Activated CD8-positive, alpha-beta T cell treated with anti-CD3 and anti-CD28 coated beads for 36 hours (primary cell): ENCODE measurements at regions of chr4 and their contacts with region 1.

Region 1: DNA sequence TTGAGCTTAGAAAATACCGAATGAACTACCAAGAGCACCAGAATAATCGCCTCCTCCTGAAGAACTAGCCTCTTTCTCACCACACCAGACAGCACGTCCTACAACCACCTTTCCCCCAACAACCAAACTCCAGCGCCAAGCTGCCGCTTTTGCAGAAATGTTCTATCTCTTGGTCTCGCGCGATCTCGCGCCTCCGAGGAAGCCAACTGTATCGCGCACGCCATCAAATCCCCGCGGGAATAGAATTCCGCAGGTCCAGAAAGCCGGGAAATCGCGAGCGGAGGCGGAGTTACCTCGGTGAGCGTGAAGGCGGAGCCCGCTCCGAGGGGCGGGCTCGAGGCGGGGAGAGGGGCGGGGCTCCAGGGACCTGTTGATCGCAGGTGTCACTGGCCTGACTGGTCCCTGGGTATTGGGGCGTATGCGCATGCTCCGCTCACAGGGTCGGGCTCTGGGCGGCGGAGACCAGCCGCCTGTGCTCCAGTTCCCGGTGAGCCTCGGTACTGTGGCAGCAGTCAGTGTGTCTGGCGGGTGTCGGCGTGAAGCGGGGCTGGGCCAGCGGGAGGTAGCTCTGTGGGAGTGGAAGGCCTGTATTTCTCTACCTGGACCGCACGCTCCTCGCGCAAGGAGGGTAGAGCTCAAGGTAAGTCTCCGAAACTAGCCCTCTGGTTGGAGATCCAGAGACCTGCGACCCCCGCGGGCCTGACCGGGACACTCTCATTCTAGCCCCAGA is at the start of gene USP53:
- DNase-seq: peak; percentile 99
- ATAC-seq: peak; percentile 93
- H3K4me3 Mint-ChIP-seq: peak within 1 kb of the TSS; percentile 83
- H3K27ac Mint-ChIP-seq: peak within 1 kb of the TSS; percentile 87
- H3K4me1 Mint-ChIP-seq: peaks cover 49% of the 10 kb centered on the region
- H3K27me3 Mint-ChIP-seq: no peaks in the 10 kb centered on the region
- CTCF ChIP-seq: no peak
- total RNA-seq, gene USP53: 14.4 to 15.8 TPM

Region 2: DNA sequence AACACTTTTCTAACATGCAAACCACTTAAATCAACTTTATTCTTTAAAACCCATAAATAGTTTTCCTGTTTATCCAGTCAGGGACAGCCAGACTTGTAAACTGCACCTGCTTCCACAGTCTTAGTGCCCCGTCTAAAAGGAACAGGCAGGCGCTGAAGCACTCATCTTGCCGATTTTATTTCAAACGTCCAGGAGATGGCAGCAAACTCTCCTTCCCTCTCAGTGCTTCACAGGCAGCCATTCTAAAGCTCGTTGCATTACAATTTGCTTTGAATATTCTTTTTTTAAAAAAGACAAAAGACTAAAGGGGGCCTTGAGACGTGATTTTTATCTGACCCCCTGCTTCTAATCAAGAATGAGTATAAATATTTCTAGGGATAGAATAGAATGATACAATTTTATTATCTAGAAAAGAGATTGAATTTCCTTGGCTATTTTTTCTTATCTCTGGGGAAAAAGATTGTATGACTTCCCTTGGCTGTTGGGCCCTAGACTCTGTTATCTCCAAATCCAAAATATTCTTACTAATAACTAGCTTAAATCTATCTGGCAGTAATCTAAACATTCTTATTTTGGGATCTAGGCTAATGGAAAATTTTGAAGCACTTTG is 170.3 kb before region 1 on chr4:
- CTCF ChIA-PET with region 1: interaction called, 35 read pairs
- POLR2A ChIA-PET with region 1: no interaction called
- intact Hi-C with region 1: no loop called
- DNase-seq: peak; percentile 71
- ATAC-seq: peak; percentile 91
- H3K4me3 Mint-ChIP-seq: no peak overlapping the region
- H3K27ac Mint-ChIP-seq: no peak overlapping the region
- H3K4me1 Mint-ChIP-seq: peaks cover 13% of the 10 kb centered on the region
- H3K27me3 Mint-ChIP-seq: no peaks in the 10 kb centered on the region
- CTCF ChIP-seq: peak; percentile 82

Region 3: DNA sequence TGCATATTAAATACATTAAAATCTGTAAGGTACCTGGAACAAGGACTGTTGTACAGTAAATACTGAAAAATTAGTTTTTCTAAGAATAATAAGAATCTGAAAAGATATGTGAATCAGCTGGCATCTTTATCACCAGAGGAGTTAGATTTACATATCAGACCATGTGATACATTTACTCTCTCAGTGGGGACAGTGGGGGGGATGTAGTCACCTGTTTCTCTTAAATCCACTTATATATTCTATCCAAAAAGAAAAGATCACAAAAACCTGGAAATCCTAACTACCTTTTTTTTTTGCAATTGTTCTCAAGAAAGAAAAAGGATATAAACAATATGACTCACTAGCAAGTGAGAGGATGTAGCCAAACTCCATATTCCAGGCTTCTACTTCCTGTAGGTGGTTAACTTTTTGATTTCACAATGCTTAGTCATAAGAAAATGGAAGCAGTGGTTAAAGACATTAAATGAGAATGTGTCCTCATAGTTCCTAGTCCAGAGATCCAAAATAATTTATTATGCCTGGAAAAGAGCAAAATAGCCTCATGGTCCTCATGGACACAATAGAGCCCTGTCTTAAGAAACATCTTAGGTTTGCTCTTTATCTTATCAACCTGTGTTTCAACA is 99.3 kb before region 1 on chr4:
- CTCF ChIA-PET with region 1: no interaction called
- POLR2A ChIA-PET with region 1: no interaction called
- intact Hi-C with region 1: no loop called
- DNase-seq: no peak
- ATAC-seq: no peak
- H3K4me3 Mint-ChIP-seq: no peak overlapping the region
- H3K27ac Mint-ChIP-seq: no peak overlapping the region
- H3K4me1 Mint-ChIP-seq: peaks cover 5% of the 10 kb centered on the region
- H3K27me3 Mint-ChIP-seq: no peaks in the 10 kb centered on the region
- CTCF ChIP-seq: no peak

Region 4: DNA sequence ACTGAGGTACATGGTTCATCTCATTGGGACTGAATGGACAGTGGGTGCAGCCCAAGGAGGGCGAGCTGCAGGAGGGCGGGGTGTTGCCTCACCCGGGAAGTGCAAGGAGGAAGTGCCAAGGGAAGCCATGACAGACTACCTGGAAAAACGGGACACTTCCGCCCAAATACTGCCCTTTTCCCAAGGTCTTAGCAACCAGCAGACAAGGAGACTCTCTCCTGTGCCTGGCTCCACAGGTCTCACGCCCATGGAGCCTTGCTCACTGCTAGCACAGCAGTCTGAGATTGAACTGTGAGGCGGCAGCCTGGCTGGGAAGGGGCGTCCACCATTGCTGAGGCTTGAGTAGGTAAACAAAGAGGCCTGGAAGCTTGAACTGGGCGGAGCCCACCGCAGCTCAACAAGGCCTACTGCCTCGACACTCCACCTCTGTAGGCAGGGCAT is 14.6 kb before region 1 on chr4:
- CTCF ChIA-PET with region 1: no interaction called
- POLR2A ChIA-PET with region 1: no interaction called
- intact Hi-C with region 1: no loop called
- DNase-seq: no peak
- ATAC-seq: no peak
- H3K4me3 Mint-ChIP-seq: no peak overlapping the region
- H3K27ac Mint-ChIP-seq: no peak overlapping the region
- H3K4me1 Mint-ChIP-seq: peaks cover 19% of the 10 kb centered on the region
- H3K27me3 Mint-ChIP-seq: no peaks in the 10 kb centered on the region
- CTCF ChIP-seq: no peak

Region 5: GRCh38 chr4:119227690-119228089 is 15.3 kb after region 1 on chr4:
- CTCF ChIA-PET with region 1: interaction called, 6 read pairs
- POLR2A ChIA-PET with region 1: interaction called, 18 read pairs
- intact Hi-C with region 1: no loop called
- DNase-seq: no peak
- ATAC-seq: no peak
- H3K4me3 Mint-ChIP-seq: no peak overlapping the region
- H3K27ac Mint-ChIP-seq: peak overlapping the region; percentile 76
- H3K4me1 Mint-ChIP-seq: peaks cover 61% of the 10 kb centered on the region
- H3K27me3 Mint-ChIP-seq: no peaks in the 10 kb centered on the region
- CTCF ChIP-seq: no peak

Region 6: GRCh38 chr4:119238068-119238722 is 25.8 kb after region 1 on chr4:
- CTCF ChIA-PET with region 1: interaction called, 12 read pairs
- POLR2A ChIA-PET with region 1: interaction called, 22 read pairs
- intact Hi-C with region 1: no loop called
- DNase-seq: peak; percentile 47
- ATAC-seq: peak; percentile 96
- H3K4me3 Mint-ChIP-seq: no peak overlapping the region
- H3K27ac Mint-ChIP-seq: peak overlapping the region; percentile 91
- H3K4me1 Mint-ChIP-seq: peaks cover 52% of the 10 kb centered on the region
- H3K27me3 Mint-ChIP-seq: no peaks in the 10 kb centered on the region
- CTCF ChIP-seq: no peak

Region 7: GRCh38 chr4:119286377-119287002 is 74.1 kb after region 1 on chr4:
- CTCF ChIA-PET with region 1: interaction called, 9 read pairs
- POLR2A ChIA-PET with region 1: interaction called, 7 read pairs
- intact Hi-C with region 1: loop called (anchors 5 kb)
- DNase-seq: peak; percentile 43
- ATAC-seq: peak; percentile 39
- H3K4me3 Mint-ChIP-seq: no peak overlapping the region
- H3K27ac Mint-ChIP-seq: no peak overlapping the region
- H3K4me1 Mint-ChIP-seq: peaks cover 19% of the 10 kb centered on the region
- H3K27me3 Mint-ChIP-seq: no peaks in the 10 kb centered on the region
- CTCF ChIP-seq: peak; percentile 74

Region 8: GRCh38 chr4:119300101-119300978 is 87.9 kb after region 1 on chr4:
- CTCF ChIA-PET with region 1: interaction called, 7 read pairs
- POLR2A ChIA-PET with region 1: interaction called, 17 read pairs
- intact Hi-C with region 1: no loop called
- DNase-seq: peak; percentile 96
- ATAC-seq: peak; percentile 99
- H3K4me3 Mint-ChIP-seq: peak overlapping the region; percentile 92
- H3K27ac Mint-ChIP-seq: peak overlapping the region; percentile 98
- H3K4me1 Mint-ChIP-seq: peaks cover 25% of the 10 kb centered on the region
- H3K27me3 Mint-ChIP-seq: peaks cover 3% of the 10 kb centered on the region
- CTCF ChIP-seq: no peak